Adrenal gland (tissue), 19 donors: ENCODE measurements at regions of chr1 and their contacts with region 1.

Region 1: GRCh38 chr1:10378081-10378841 is 20.6 kb upstream of the PGD start:
- DNase-seq: peak; percentile 83 to 97 (median 95)
- H3K4me3 ChIP-seq: peak overlapping the region in 1 of 4 donors; percentile 11
- H3K27ac ChIP-seq: peak overlapping the region; percentile 59 to 89 (median 80)
- H3K4me1 ChIP-seq: peaks cover 9 to 19% of the 10 kb centered on the region in 2 donors
- H3K27me3 ChIP-seq: no peaks in the 10 kb centered on the region
- CTCF ChIP-seq: no peak
- POLR2A ChIP-seq: peak in 1 of 2 donors; percentile 27

Region 2: GRCh38 chr1:10189659-10190058 is 188.6 kb before region 1 on chr1:
- intact Hi-C with region 1: no loop called
- DNase-seq: no peak
- H3K4me3 ChIP-seq: no peak overlapping the region
- H3K27ac ChIP-seq: no peak overlapping the region
- H3K4me1 ChIP-seq: no peaks in the 10 kb centered on the region
- H3K27me3 ChIP-seq: no peaks in the 10 kb centered on the region
- CTCF ChIP-seq: no peak
- POLR2A ChIP-seq: no peak

Region 3: DNA sequence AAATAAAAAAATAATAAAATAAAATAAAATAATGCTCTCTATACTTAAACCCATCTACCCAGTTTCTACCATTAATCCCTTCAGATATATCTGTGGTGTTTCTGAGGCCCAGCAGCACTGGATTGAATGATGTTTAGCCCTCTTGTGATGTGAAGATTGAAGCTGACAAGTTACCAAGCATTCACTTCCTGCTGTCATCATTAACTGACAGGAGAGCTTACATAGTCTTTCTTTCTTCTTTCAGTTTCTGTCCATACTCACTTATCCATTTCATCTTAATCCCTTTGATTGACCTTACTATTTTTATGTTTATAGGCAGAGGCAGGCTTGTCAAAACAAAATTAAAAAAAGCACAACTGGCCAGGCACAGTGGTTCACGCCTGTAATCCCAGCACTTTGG is 18.2 kb before region 1 on chr1:
- intact Hi-C with region 1: no loop called
- DNase-seq: no peak
- H3K4me3 ChIP-seq: no peak overlapping the region
- H3K27ac ChIP-seq: no peak overlapping the region
- H3K4me1 ChIP-seq: no peaks in the 10 kb centered on the region
- H3K27me3 ChIP-seq: no peaks in the 10 kb centered on the region
- CTCF ChIP-seq: no peak
- POLR2A ChIP-seq: no peak

Region 4: GRCh38 chr1:10424034-10424433 is 45.8 kb after region 1 on chr1:
- intact Hi-C with region 1: loop called (anchors 5 kb)
- DNase-seq: peak in 6 of 7 donors; percentile 35 to 71 (median 44)
- H3K4me3 ChIP-seq: no peak overlapping the region
- H3K27ac ChIP-seq: no peak overlapping the region
- H3K4me1 ChIP-seq: peaks cover 0 to 6% of the 10 kb centered on the region in 2 donors
- H3K27me3 ChIP-seq: no peaks in the 10 kb centered on the region
- CTCF ChIP-seq: no peak
- POLR2A ChIP-seq: no peak

Region 5: GRCh38 chr1:10430216-10431069 is 52.2 kb after region 1 on chr1 and contains the start of gene CENPS:
- intact Hi-C with region 1: loop called in 1 of 2 experiments (anchors 5 kb)
- DNase-seq: peak; percentile 83 to 95 (median 90)
- H3K4me3 ChIP-seq: peak within 1 kb of the TSS; percentile 15 to 70 (median 68)
- H3K27ac ChIP-seq: peak within 1 kb of the TSS in 2 of 5 donors; percentile 39 to 79
- H3K4me1 ChIP-seq: peaks cover 9 to 20% of the 10 kb centered on the region in 2 donors
- H3K27me3 ChIP-seq: no peaks in the 10 kb centered on the region
- CTCF ChIP-seq: peak; percentile 75 to 99 (median 94)
- POLR2A ChIP-seq: no peak
- total RNA-seq, gene CENPS: 10.0 to 32.9 (median 16.3) TPM

Region 6: DNA sequence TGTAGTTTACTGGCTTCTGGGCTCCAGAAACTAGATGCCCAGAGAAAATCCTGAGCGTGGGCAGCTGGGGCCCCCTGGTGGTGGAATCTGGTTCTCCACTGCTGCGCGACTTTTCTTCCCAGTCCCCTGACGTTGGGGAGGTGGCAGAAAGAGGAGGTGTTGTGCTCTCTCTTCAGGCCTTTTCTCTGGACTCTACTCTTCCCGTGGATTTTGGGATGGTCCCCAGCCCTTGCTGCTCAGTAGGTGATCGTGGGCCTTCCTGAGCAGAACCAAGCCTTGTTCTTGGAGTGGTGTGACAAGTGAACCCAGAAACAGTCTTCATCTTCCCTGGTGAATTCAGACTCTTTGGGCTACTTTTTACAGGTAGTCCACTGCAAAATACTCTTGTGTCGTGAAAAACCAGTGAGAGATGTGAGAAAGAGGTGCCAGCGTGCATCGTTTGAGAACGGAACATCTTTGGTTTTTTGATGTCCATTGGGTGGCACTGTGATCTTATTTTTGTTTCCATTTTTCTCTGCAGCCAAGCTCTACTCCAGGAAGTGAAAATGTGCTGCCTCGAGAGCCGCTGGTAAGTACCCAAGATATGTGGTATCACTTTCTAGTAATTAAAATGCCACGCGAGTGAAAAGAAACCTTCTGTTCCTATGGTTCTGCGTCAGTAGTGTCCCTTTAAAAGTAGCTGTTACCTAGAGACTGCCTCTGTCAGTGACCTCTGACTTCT is 116.7 kb after region 1 on chr1:
- intact Hi-C with region 1: loop called in 1 of 2 experiments (anchors 10 kb)
- DNase-seq: peak; percentile 60 to 92 (median 80)
- H3K4me3 ChIP-seq: peak overlapping the region in 1 of 4 donors; percentile 50
- H3K27ac ChIP-seq: peak overlapping the region in 2 of 5 donors; percentile 3 to 38
- H3K4me1 ChIP-seq: peaks cover 5 to 20% of the 10 kb centered on the region in 2 donors
- H3K27me3 ChIP-seq: no peaks in the 10 kb centered on the region
- CTCF ChIP-seq: peak; percentile 82 to 97 (median 92)
- POLR2A ChIP-seq: no peak

Region 7: GRCh38 chr1:10612436-10613160 is 234.3 kb after region 1 on chr1:
- intact Hi-C with region 1: no loop called
- DNase-seq: peak in 1 of 7 donors; percentile 66
- H3K4me3 ChIP-seq: no peak overlapping the region
- H3K27ac ChIP-seq: no peak overlapping the region
- H3K4me1 ChIP-seq: peaks cover 0 to 5% of the 10 kb centered on the region in 2 donors
- H3K27me3 ChIP-seq: no peaks in the 10 kb centered on the region
- CTCF ChIP-seq: no peak
- POLR2A ChIP-seq: no peak